Pancreas (tissue), 10 donors: ENCODE measurements at regions of chr2 and their contacts with region 1.

Region 1: DNA sequence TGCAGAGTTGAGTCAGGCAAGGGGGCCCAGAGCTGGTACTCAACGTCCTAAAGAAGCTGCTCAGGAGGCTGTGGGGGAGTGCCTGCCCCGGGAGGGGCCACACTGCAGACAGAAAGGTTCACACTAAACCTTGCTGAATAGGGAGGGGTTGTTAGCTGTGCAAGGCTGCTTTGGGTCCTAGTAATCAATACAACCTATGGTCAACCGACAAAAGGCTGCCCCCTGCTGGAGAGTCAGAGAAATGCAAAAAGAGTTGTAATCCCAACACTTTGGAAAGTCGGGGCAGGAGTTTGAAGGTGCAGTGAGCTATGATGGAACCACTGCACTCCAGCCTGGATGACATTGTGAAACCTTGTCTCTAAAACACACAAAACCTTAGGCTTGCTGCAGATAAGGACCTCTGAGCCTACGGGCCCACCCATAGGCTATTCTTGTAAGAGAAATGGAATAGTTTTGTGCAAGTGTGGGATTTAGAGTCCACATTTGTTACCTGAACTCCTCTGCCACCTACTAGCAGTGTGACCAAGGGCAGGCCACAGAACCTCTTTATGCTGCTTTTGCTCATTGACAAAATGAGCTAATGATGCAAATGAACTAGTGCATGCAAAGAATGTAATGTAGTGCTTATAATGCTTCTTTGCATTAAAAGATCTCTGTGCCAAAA is 81.5 kb downstream of the PRPF40A start:
- DNase-seq: peak in 5 of 6 donors; percentile 30 to 75 (median 62)
- ATAC-seq: peak; percentile 72 to 93 (median 84)
- H3K4me3 ChIP-seq: no peak overlapping the region
- H3K27ac ChIP-seq: no peak overlapping the region
- H3K4me1 ChIP-seq: no peaks in the 10 kb centered on the region
- H3K27me3 ChIP-seq: no peaks in the 10 kb centered on the region
- CTCF ChIP-seq: peak; percentile 78 to 88 (median 83)

Region 2: DNA sequence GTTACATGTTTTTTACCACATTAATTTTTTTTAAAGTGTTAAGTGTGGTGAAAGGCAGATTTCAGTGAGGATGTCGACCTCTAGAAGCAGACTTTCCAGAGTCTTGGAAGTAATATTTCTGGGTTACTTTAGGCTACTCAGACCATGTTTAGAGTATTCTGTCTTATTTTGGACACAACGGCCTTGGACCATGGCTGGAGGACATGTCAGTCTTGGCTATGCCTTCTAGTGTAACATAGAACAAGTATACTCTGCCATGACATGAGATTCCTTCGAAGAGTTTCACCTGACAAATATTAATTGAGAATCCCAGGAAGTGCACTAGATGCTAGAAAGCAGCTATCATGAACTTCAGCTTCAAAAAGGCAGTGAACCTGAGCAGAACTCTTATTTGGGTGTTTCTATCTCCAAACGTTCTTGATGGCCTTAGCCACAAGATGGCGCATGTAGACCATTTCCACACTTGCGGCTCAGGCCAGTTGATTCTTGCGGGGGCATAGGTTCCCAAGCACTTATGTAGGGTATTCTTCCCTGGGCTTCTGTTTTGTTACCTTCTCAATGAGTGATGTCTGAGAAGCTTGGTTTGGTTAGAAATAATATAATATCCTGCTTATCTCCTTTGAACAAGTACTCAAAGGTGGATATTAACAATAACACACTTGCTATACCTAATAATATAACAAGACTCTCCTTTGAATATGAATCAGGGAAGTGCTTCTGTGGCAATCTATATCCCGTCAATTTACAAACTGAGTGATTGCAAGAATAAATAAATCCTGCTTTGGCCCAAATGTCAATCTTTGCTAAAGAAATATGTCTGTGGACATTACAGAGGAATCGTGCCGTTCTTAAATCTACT is 598.9 kb before region 1 on chr2:
- intact Hi-C with region 1: loop called in 2 of 3 experiments (anchors 10 kb)
- DNase-seq: peak in 5 of 6 donors; percentile 31 to 64 (median 55)
- ATAC-seq: peak; percentile 78 to 95 (median 91)
- H3K4me3 ChIP-seq: no peak overlapping the region
- H3K27ac ChIP-seq: no peak overlapping the region
- H3K4me1 ChIP-seq: no peaks in the 10 kb centered on the region
- H3K27me3 ChIP-seq: no peaks in the 10 kb centered on the region
- CTCF ChIP-seq: peak; percentile 33 to 67 (median 66)

Region 3: DNA sequence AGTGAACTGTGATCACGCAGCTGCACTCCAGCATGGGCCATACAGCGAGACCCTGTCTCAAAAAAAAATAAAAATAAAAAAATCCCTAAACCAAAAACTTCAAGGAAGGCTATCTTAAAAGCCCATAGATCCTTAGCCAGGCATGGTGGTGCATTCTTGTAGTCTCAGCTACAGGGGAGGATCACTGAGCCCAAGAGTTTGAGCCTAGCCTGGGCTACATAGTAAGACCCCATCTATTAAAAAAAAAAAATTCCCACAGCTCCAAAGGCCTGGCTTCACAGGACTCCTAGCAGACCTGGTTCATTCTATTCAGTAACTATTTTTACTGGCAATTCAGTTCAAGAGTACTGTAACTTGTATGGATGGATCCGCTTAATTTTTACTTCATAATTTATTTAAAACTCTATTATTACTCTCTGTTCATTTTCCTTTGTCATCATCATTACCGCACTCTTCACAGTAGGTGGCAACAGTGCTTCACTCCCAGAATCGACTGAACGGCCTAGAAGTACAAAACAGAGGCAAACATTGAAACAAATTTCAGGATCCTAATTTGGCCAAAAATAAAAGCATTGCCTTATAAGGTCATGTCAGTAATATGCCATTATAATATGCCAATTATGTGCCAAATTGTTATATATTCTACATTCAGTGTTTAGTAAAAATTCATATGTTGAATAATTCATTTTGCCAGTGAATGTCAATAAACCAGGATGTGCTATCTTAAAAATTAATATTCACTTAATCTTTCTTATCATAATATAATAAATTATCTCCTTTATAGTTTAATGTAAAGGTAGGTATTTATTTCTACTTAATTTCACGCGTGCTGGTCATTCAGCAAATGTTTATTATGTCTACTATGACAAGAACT is 445.9 kb before region 1 on chr2:
- intact Hi-C with region 1: loop called (anchors 5 to 10 kb)
- DNase-seq: peak in 1 of 6 donors; percentile 47
- ATAC-seq: peak; percentile 78 to 94 (median 93)
- H3K4me3 ChIP-seq: no peak overlapping the region
- H3K27ac ChIP-seq: no peak overlapping the region
- H3K4me1 ChIP-seq: no peaks in the 10 kb centered on the region
- H3K27me3 ChIP-seq: no peaks in the 10 kb centered on the region
- CTCF ChIP-seq: peak; percentile 7 to 56 (median 50)

Region 4: DNA sequence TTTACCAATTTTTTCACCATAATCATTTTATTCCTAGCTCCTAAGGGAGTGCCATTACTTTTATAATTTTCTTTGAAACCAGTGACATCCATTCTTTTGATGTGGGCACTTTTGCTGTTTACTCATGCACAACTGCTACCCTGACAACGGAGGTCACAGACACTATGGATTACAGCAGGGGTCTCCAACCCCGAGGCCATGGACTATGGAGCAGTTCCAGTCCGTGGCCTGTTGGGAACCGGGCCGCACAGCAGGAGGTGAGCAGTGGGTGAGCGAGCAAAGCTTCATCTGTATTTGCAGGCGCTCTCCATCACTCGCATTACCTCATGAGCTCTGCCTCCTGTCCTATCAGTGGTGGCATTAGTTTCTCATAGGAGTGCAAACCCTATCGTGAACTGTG is 46.9 kb after region 1 on chr2:
- intact Hi-C with region 1: no loop called
- DNase-seq: no peak
- ATAC-seq: no peak
- H3K4me3 ChIP-seq: no peak overlapping the region
- H3K27ac ChIP-seq: no peak overlapping the region
- H3K4me1 ChIP-seq: peaks cover 0 to 6% (median 3%) of the 10 kb centered on the region in 3 donors
- H3K27me3 ChIP-seq: no peaks in the 10 kb centered on the region
- CTCF ChIP-seq: no peak

Region 5: DNA sequence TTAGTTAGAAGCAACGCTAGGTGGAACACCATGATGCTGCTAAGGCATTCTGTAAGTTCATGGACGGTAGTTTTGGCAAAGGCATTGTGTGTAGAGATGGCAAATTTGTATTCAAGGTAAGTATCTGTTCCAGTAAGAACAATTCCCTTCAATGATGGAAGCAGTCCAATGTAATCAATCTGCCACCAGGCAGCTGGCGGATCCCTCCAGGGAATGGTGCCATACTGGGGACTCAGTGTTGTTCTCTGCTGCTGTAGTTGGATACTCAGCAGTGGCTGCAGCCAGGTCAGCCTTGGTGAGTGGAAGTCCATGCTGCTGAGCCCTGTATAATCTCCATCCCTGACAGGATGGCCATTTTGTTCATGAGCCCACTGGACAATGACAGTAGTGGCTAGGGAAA is 145.4 kb after region 1 on chr2:
- intact Hi-C with region 1: no loop called
- DNase-seq: no peak
- ATAC-seq: no peak
- H3K4me3 ChIP-seq: no peak overlapping the region
- H3K27ac ChIP-seq: no peak overlapping the region
- H3K4me1 ChIP-seq: no peaks in the 10 kb centered on the region
- H3K27me3 ChIP-seq: no peaks in the 10 kb centered on the region
- CTCF ChIP-seq: no peak